Activated B cell treated with CpG ODN at 0.5 μM for 24 hours (primary cell): ENCODE measurements at regions of chr18 and their contacts with region 1.

Region 1: DNA sequence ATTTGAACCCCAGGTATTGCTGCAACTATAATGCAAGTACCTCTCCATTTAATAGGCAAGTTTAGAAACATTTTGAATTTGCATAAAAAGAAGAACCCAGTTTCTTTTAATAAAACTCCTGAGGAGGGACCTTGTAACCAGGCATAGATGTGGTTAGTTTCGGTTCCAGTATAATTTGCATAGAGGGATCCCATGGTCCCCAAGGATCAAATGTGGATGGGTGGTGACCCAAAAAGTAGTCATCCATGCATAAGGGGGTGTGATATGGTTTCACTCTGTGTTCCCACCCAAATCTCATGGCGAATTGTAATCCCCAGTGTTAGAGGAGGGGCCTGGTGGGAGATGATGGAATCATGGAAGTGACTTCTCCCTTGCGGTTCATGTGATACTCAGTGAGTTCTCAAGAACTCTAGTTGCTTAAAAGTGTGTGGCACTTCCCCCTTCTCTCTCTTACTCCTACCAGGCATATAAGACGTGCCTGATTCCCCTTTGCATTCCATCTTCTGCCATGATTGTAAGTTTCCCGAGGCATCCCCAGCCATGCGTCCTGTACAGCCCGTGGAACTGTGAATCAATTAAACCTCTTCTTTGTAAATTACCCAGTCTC is 40.2 kb upstream of the SKA1 start:
- DNase-seq: no peak
- ATAC-seq: peak; percentile 91
- H3K4me3 Mint-ChIP-seq: peak overlapping the region; percentile 64
- H3K27ac Mint-ChIP-seq: peak overlapping the region; percentile 48
- H3K4me1 Mint-ChIP-seq: peaks cover 77% of the 10 kb centered on the region
- H3K27me3 Mint-ChIP-seq: peaks cover 3% of the 10 kb centered on the region
- CTCF ChIP-seq: no peak

Region 2: GRCh38 chr18:49459404-49460171 is 875.1 kb before region 1 on chr18:
- CTCF ChIA-PET with region 1: no interaction called
- POLR2A ChIA-PET with region 1: no interaction called
- intact Hi-C with region 1: loop called (anchors 1 kb)
- DNase-seq: no peak
- ATAC-seq: peak; percentile 23
- H3K4me3 Mint-ChIP-seq: peak overlapping the region; percentile 88
- H3K27ac Mint-ChIP-seq: peak overlapping the region; percentile 77
- H3K4me1 Mint-ChIP-seq: peaks cover 45% of the 10 kb centered on the region
- H3K27me3 Mint-ChIP-seq: no peaks in the 10 kb centered on the region
- CTCF ChIP-seq: no peak

Region 3: GRCh38 chr18:50287441-50288347 is 47.0 kb before region 1 on chr18 and contains the start of gene CXXC1:
- CTCF ChIA-PET with region 1: no interaction called
- POLR2A ChIA-PET with region 1: no interaction called
- intact Hi-C with region 1: loop called (anchors 2 kb)
- DNase-seq: peak; percentile 88
- ATAC-seq: peak; percentile 87
- H3K4me3 Mint-ChIP-seq: peak within 1 kb of the TSS; percentile 99
- H3K27ac Mint-ChIP-seq: peak within 1 kb of the TSS; percentile 95
- H3K4me1 Mint-ChIP-seq: peaks cover 23% of the 10 kb centered on the region
- H3K27me3 Mint-ChIP-seq: no peaks in the 10 kb centered on the region
- CTCF ChIP-seq: no peak
- total RNA-seq, gene CXXC1: 126 and 134 TPM in 2 replicates

Region 4: GRCh38 chr18:50297621-50298442 is 36.8 kb before region 1 on chr18:
- CTCF ChIA-PET with region 1: no interaction called
- POLR2A ChIA-PET with region 1: no interaction called
- intact Hi-C with region 1: loop called (anchors 1 kb)
- DNase-seq: peak; percentile 73
- ATAC-seq: peak; percentile 99
- H3K4me3 Mint-ChIP-seq: peak overlapping the region; percentile 83
- H3K27ac Mint-ChIP-seq: peak overlapping the region; percentile 41
- H3K4me1 Mint-ChIP-seq: peaks cover 14% of the 10 kb centered on the region
- H3K27me3 Mint-ChIP-seq: no peaks in the 10 kb centered on the region
- CTCF ChIP-seq: no peak

Region 5: GRCh38 chr18:50315100-50315871 is 19.4 kb before region 1 on chr18:
- CTCF ChIA-PET with region 1: no interaction called
- POLR2A ChIA-PET with region 1: no interaction called
- intact Hi-C with region 1: loop called (anchors 1 kb)
- DNase-seq: no peak
- ATAC-seq: peak; percentile 78
- H3K4me3 Mint-ChIP-seq: peak overlapping the region; percentile 42
- H3K27ac Mint-ChIP-seq: peak overlapping the region; percentile 19
- H3K4me1 Mint-ChIP-seq: peaks cover 69% of the 10 kb centered on the region
- H3K27me3 Mint-ChIP-seq: no peaks in the 10 kb centered on the region
- CTCF ChIP-seq: no peak

Region 6: DNA sequence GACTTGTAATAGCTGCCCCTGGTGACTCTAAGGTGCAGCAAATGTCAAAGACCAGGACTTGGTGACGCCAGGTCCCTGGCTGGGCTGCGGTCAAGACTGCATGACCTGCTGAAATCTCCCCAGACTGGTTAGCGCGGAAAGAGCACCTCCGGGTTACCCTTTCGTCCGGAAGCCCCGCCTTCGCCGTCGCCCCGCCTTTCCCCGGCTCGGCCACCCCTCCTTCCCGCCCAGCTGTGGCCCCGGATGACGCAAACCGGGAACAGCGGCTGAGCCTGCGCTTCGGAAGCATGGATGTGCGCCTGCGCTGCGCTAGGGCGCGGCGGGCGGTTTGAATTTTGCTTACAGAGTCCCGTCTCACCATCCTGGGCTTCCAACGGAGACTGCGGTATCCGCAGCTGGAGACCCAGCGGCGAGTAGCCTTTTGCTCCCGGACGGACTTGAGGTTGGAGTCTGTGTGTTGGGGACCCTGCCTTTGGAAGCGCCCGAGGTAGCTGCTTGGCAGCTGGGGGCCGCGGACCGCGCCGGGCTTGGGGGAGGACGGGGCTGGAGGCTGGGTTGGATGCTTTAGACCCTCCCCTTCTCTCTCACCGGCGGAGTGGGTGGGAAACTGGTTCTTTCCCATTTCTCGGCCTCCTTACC is 40.2 kb after region 1 on chr18 and contains the start of gene SKA1:
- CTCF ChIA-PET with region 1: no interaction called
- POLR2A ChIA-PET with region 1: interaction called, 3 read pairs
- intact Hi-C with region 1: loop called (anchors 1 kb)
- DNase-seq: peak; percentile 85
- ATAC-seq: peak; percentile 100
- H3K4me3 Mint-ChIP-seq: peak within 1 kb of the TSS; percentile 83
- H3K27ac Mint-ChIP-seq: peak within 1 kb of the TSS; percentile 84
- H3K4me1 Mint-ChIP-seq: peaks cover 14% of the 10 kb centered on the region
- H3K27me3 Mint-ChIP-seq: peaks cover 6% of the 10 kb centered on the region
- CTCF ChIP-seq: no peak
- total RNA-seq, gene SKA1: 0.71 and 1.0 TPM in 2 replicates